CD8-positive, alpha-beta T cell (primary cell): ENCODE measurements at regions of chr18 and their contacts with region 1.

Region 1: GRCh38 chr18:28984731-28985130 is 807.8 kb upstream of the CDH2 start:
- DNase-seq: no peak
- ATAC-seq: no peak
- H3K4me3 ChIP-seq: no peak overlapping the region
- H3K4me3 Mint-ChIP-seq: no peak overlapping the region
- H3K27ac ChIP-seq: no peak overlapping the region
- H3K27ac Mint-ChIP-seq: no peak overlapping the region
- H3K4me1 ChIP-seq: no peaks in the 10 kb centered on the region
- H3K4me1 Mint-ChIP-seq: no peaks in the 10 kb centered on the region
- H3K27me3 ChIP-seq: no peaks in the 10 kb centered on the region
- H3K27me3 Mint-ChIP-seq: no peaks in the 10 kb centered on the region
- CTCF ChIP-seq: no peak

Region 2: GRCh38 chr18:29002747-29003565 is 18.2 kb after region 1 on chr18:
- CTCF ChIA-PET with region 1: no interaction called
- POLR2A ChIA-PET with region 1: interaction called, 5 read pairs
- intact Hi-C with region 1: loop called in 1 of 2 experiments (anchors 2 kb)
- DNase-seq: no peak
- ATAC-seq: no peak
- H3K4me3 ChIP-seq: no peak overlapping the region
- H3K4me3 Mint-ChIP-seq: no peak overlapping the region
- H3K27ac ChIP-seq: no peak overlapping the region
- H3K27ac Mint-ChIP-seq: no peak overlapping the region
- H3K4me1 ChIP-seq: no peaks in the 10 kb centered on the region
- H3K4me1 Mint-ChIP-seq: no peaks in the 10 kb centered on the region
- H3K27me3 ChIP-seq: no peaks in the 10 kb centered on the region
- H3K27me3 Mint-ChIP-seq: no peaks in the 10 kb centered on the region
- CTCF ChIP-seq: no peak